AG04449 (cell line): ENCODE measurements at regions of chr2 and their contacts with region 1.

Region 1: GRCh38 chr2:44981136-44982108 is 27.8 kb downstream of the SIX2 start:
- DNase-seq: peak; percentile 12
- H3K4me3 ChIP-seq: no peak overlapping the region
- CTCF ChIP-seq: peak; percentile 84

Region 2: GRCh38 chr2:45237850-45238542 is 256.6 kb after region 1 on chr2:
- CTCF ChIA-PET with region 1: interaction called, 11 read pairs
- POLR2A ChIA-PET with region 1: no interaction called
- DNase-seq: peak; percentile 86
- H3K4me3 ChIP-seq: no peak overlapping the region
- CTCF ChIP-seq: peak; percentile 39

Region 3: DNA sequence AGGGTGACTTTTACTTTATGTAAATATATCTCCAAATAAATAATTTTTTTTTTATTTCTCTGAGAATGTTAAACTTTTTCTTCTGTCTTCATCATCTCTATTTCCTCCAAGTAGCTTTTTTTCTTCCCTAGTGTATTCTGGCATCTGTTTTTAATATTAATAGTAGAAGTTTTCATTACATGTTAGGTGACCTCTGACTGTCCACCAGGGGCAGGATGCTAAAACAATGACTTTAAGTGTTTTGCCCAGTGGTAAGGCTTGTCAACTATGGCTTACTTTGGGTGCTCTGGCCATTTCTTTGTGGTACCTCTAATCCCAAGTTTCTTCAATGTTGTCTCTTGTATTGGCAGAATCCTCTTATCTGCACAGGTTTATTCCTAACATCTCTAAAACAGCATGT is 502.6 kb after region 1 on chr2:
- CTCF ChIA-PET with region 1: interaction called, 37 read pairs
- POLR2A ChIA-PET with region 1: no interaction called
- DNase-seq: no peak
- H3K4me3 ChIP-seq: no peak overlapping the region
- CTCF ChIP-seq: peak; percentile 15

Region 4: DNA sequence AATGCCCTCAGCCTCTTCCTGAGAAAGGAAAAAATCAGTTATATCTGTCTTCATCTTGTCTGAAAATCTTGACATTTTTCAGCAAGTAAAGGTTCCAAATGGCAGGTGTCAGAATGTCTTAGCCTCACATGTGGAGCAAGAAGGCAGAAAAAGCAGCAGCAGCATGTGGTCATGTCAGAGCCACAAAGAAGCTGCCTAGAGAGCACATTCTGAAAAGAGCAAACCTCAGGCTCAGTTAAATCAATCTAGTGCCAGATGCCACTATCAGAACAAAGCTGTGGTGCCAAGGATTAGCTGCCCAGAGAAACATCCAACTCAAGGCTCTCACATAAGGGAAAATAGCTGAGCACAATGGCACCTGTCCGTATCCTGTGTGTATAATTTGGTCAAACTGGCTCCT is 523.7 kb after region 1 on chr2:
- CTCF ChIA-PET with region 1: interaction called, 365 read pairs
- POLR2A ChIA-PET with region 1: no interaction called
- DNase-seq: no peak
- H3K4me3 ChIP-seq: no peak overlapping the region
- CTCF ChIP-seq: no peak

Region 5: DNA sequence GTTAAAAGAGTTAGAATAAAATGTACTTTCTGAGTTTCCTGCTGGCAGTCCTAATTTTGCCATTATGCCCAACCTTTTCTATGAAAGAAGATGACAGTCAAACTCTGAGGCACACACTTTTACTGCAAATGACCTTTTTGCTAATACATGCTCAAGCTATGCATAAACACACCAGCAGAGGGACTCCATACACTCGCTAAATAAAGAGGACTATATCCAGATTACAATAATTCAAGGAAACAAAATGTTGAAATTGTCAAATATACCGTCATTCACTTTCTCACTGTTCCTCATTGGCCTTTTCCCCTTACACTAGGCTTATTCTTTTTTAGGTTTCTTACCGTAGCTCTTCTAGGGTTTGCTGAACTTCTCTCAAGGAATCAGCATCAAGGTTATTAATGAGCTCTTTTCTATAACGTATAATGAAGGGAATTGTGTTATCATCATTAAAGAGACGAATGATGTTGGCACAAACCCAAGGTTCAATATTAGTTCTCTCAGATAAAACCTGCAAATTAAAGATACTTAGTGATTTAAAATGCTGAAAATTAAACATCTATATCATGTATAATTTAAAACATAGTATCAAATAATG is 603.9 kb after region 1 on chr2:
- CTCF ChIA-PET with region 1: interaction called, 23 read pairs
- POLR2A ChIA-PET with region 1: no interaction called
- DNase-seq: no peak
- H3K4me3 ChIP-seq: no peak overlapping the region
- CTCF ChIP-seq: peak; percentile 56